Mammary epithelial cell (primary cell): ENCODE measurements at regions of chr6 and their contacts with region 1.

Region 1: GRCh38 chr6:79078075-79079025 is at the start of gene PHIP:
- DNase-seq: peak; percentile 96
- H3K4me3 ChIP-seq: peak within 1 kb of the TSS; percentile 68 to 98 (median 86)
- H3K27ac ChIP-seq: peak within 1 kb of the TSS; percentile 80
- H3K4me1 ChIP-seq: peaks cover 10% of the 10 kb centered on the region
- H3K27me3 ChIP-seq: no peaks in the 10 kb centered on the region
- CTCF ChIP-seq: no peak
- total RNA-seq, gene PHIP: 17.2 to 18.0 TPM

Region 2: DNA sequence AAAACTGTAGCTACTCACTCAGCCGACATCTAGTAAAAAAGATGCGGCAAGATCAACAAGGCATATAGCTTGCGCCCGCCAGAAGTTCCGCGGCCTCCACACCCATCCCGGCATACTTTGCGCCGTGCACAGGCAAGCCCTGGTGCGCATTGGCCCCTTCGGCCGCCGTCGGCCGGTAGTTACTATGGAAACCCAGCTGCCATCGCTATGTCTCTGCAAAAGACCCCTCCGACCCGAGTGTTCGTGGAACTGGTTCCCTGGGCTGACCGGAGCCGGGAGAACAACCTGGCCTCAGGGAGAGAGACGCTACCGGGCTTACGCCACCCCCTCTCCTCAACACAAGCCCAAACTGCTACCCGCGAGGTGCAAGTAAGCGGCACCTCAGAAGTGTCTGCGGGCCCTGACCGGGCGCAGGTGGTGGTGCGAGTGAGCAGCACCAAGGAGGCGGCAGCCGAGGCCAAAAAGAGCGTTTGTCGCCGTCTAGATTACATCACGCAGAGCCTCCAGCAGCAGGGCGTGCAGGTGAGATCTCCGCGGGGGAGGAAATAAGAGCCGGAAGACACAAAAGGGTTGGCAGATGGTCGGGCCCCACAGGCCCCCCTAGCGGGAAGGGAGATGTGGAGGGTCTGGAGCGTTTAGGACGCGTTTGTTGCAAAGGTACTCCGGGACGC is 210.8 kb before region 1 on chr6 and contains the start of gene IRAK1BP1:
- CTCF ChIA-PET with region 1: no interaction called
- dilution Hi-C with region 1: no loop called
- in situ Hi-C with region 1: no loop called
- intact Hi-C with region 1: loop called (anchors 1 kb)
- DNase-seq: peak; percentile 77
- H3K4me3 ChIP-seq: peak within 1 kb of the TSS; percentile 68 to 83 (median 72)
- H3K27ac ChIP-seq: peak within 1 kb of the TSS; percentile 76
- H3K4me1 ChIP-seq: peaks cover 3% of the 10 kb centered on the region
- H3K27me3 ChIP-seq: no peaks in the 10 kb centered on the region
- CTCF ChIP-seq: peak in 1 of 2 donors; percentile 2
- total RNA-seq, gene IRAK1BP1: 6.2 to 8.0 TPM

Region 3: DNA sequence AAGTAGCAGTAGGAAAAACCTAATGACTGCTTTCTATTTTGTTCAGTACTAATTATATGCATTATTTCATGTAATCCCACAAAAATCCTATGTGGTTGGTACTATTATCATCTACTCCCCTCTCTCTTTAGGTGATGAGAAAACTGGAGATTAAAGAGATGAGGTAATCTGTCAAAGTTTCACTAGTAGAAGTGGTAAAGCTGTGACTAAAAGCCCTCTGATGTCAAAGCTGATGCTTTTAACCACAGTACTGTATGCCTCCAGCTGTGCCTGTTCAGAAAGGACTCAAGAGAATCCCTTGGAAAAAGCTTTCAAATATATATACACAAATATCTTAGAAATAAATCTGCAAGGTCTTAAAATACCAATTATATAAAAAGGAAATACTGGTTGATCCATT is 38.3 kb before region 1 on chr6:
- CTCF ChIA-PET with region 1: no interaction called
- dilution Hi-C with region 1: no loop called
- in situ Hi-C with region 1: no loop called
- intact Hi-C with region 1: no loop called
- DNase-seq: peak; percentile 9
- H3K4me3 ChIP-seq: no peak overlapping the region
- H3K27ac ChIP-seq: no peak overlapping the region
- H3K4me1 ChIP-seq: no peaks in the 10 kb centered on the region
- H3K27me3 ChIP-seq: no peaks in the 10 kb centered on the region
- CTCF ChIP-seq: no peak

Region 4: GRCh38 chr6:79196912-79197311 is 118.6 kb after region 1 on chr6:
- CTCF ChIA-PET with region 1: no interaction called
- dilution Hi-C with region 1: no loop called
- in situ Hi-C with region 1: no loop called
- intact Hi-C with region 1: no loop called
- DNase-seq: no peak
- H3K4me3 ChIP-seq: no peak overlapping the region
- H3K27ac ChIP-seq: no peak overlapping the region
- H3K4me1 ChIP-seq: no peaks in the 10 kb centered on the region
- H3K27me3 ChIP-seq: no peaks in the 10 kb centered on the region
- CTCF ChIP-seq: no peak

Region 5: GRCh38 chr6:79307321-79308036 is 229.1 kb after region 1 on chr6:
- CTCF ChIA-PET with region 1: no interaction called
- dilution Hi-C with region 1: no loop called
- in situ Hi-C with region 1: no loop called
- intact Hi-C with region 1: loop called (anchors 2 kb)
- DNase-seq: peak; percentile 95
- H3K4me3 ChIP-seq: no peak overlapping the region
- H3K27ac ChIP-seq: peak overlapping the region; percentile 48
- H3K4me1 ChIP-seq: peaks cover 11% of the 10 kb centered on the region
- H3K27me3 ChIP-seq: no peaks in the 10 kb centered on the region
- CTCF ChIP-seq: no peak

Region 6: GRCh38 chr6:79536954-79537747 is 458.8 kb after region 1 on chr6 and contains the start of gene LCA5:
- CTCF ChIA-PET with region 1: no interaction called
- dilution Hi-C with region 1: no loop called
- in situ Hi-C with region 1: no loop called
- intact Hi-C with region 1: loop called (anchors 5 kb)
- DNase-seq: peak; percentile 98
- H3K4me3 ChIP-seq: peak within 1 kb of the TSS; percentile 95 to 98 (median 97)
- H3K27ac ChIP-seq: peak within 1 kb of the TSS; percentile 99
- H3K4me1 ChIP-seq: no peaks in the 10 kb centered on the region
- H3K27me3 ChIP-seq: no peaks in the 10 kb centered on the region
- CTCF ChIP-seq: no peak
- total RNA-seq, gene LCA5: 4.8 to 20.0 TPM